GM12878 (cell line): ENCODE measurements at regions of chr2 and their contacts with region 1.

Region 1: GRCh38 chr2:57906152-57906732 is 140.4 kb upstream of the VRK2 start:
- DNase-seq: no peak
- ATAC-seq: peak; percentile 78
- H3K4me3 ChIP-seq: no peak overlapping the region
- H3K27ac ChIP-seq: no peak overlapping the region
- H3K4me1 ChIP-seq: peaks cover 11% of the 10 kb centered on the region; the same call in 1 of the 2 replicates
- H3K27me3 ChIP-seq: no peaks in the 10 kb centered on the region
- CTCF ChIP-seq: peak; percentile 86 to 90 (median 89); a peak in 5 of 6 replicates
- EP300 ChIP-seq: no peak
- POLR2A ChIP-seq: no peak
- RAD21 ChIP-seq: peak; percentile 100

Region 2: GRCh38 chr2:57720728-57721627 is 185.3 kb before region 1 on chr2:
- CTCF ChIA-PET with region 1: interaction called, 13 read pairs
- POLR2A ChIA-PET with region 1: no interaction called
- RAD21 ChIA-PET with region 1: interaction called, 10 read pairs
- SMC1A ChIA-PET with region 1: interaction called, 7 read pairs
- in situ Hi-C with region 1: no loop called
- intact Hi-C with region 1: loop called (anchors 2 kb)
- DNase-seq: peak; percentile 47
- ATAC-seq: peak; percentile 99
- H3K4me3 ChIP-seq: no peak overlapping the region
- H3K27ac ChIP-seq: no peak overlapping the region
- H3K4me1 ChIP-seq: no peaks in the 10 kb centered on the region
- H3K27me3 ChIP-seq: no peaks in the 10 kb centered on the region
- CTCF ChIP-seq: peak; percentile 91
- EP300 ChIP-seq: no peak
- POLR2A ChIP-seq: no peak
- RAD21 ChIP-seq: peak; percentile 93

Region 3: DNA sequence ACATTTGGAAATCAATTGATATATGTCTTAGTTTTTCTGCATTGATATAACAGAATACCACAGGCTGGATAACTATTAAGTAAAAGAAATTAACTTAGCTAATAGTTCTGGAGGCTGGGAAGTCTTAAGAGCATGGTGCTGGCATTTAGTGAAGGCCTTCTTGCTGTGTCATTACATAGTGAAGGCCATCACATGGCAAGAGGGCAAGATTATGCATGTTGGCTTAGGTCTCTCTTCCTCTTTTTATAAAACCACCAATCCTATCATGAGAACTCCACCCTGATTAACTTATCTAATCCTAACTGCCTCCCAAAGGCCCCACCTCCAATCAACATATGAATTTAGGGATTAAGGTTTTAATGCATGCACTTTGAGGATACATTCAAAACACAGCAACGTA is 85.2 kb before region 1 on chr2:
- CTCF ChIA-PET with region 1: no interaction called
- POLR2A ChIA-PET with region 1: no interaction called
- RAD21 ChIA-PET with region 1: no interaction called
- SMC1A ChIA-PET with region 1: no interaction called
- in situ Hi-C with region 1: no loop called
- intact Hi-C with region 1: no loop called
- DNase-seq: no peak
- ATAC-seq: peak; percentile 55
- H3K4me3 ChIP-seq: no peak overlapping the region
- H3K27ac ChIP-seq: no peak overlapping the region
- H3K4me1 ChIP-seq: no peaks in the 10 kb centered on the region
- H3K27me3 ChIP-seq: no peaks in the 10 kb centered on the region
- CTCF ChIP-seq: no peak
- EP300 ChIP-seq: no peak
- POLR2A ChIP-seq: no peak
- RAD21 ChIP-seq: no peak

Region 4: DNA sequence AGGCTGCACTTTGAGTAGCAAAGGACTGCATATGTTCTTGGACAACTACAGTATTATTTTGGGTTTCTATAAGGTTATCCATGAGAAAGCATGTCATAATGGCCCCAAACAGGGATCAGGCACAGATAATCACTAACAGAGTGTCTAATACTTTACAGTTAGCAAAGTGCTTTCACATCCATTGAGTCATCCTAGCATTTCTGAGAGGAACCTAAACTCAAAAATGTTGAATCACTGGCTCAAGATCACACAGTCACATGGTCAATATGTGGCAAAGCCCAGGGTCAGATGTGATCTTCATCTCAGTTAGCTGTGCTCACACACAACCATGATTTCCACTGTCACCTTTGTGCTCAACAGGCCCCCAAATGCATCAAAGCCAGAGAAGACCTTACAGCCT is 15.8 kb before region 1 on chr2:
- CTCF ChIA-PET with region 1: interaction called, 22 read pairs
- POLR2A ChIA-PET with region 1: interaction called, 4 read pairs
- RAD21 ChIA-PET with region 1: interaction called, 74 read pairs
- SMC1A ChIA-PET with region 1: interaction called, 159 read pairs
- in situ Hi-C with region 1: no loop called
- intact Hi-C with region 1: loop called (anchors 2 kb)
- DNase-seq: no peak
- ATAC-seq: peak; percentile 60
- H3K4me3 ChIP-seq: no peak overlapping the region
- H3K27ac ChIP-seq: no peak overlapping the region
- H3K4me1 ChIP-seq: peaks cover 63% of the 10 kb centered on the region
- H3K27me3 ChIP-seq: no peaks in the 10 kb centered on the region
- CTCF ChIP-seq: no peak
- EP300 ChIP-seq: 0 out of 4 replicates have a peak, but pooled peaks of 1 of the 2 experiments have one; percentile 12
- POLR2A ChIP-seq: no peak
- RAD21 ChIP-seq: no peak

Region 5: DNA sequence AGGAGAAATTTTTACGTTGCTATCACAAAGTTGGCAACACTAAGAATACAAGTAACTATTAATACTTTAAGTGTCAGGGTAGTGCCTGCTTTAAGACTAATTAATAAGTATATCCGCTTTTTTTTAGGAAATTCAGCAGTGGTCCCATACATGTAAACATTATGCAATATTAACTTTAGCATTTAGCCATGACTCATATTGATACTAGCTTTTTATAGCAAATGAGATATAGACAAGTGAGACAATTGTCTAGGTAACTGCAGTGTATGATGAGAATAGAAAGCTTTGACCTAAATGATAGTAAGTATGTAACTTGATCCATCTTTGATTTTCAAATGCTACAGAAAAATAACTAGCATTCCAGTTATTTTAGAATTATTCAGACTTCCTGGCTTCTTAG is 113.0 kb after region 1 on chr2:
- CTCF ChIA-PET with region 1: interaction called, 4 read pairs
- POLR2A ChIA-PET with region 1: interaction called, 5 read pairs
- RAD21 ChIA-PET with region 1: interaction called, 17 read pairs
- SMC1A ChIA-PET with region 1: interaction called, 18 read pairs
- in situ Hi-C with region 1: no loop called
- intact Hi-C with region 1: no loop called
- DNase-seq: no peak
- ATAC-seq: peak; percentile 81
- H3K4me3 ChIP-seq: no peak overlapping the region
- H3K27ac ChIP-seq: no peak overlapping the region
- H3K4me1 ChIP-seq: peaks cover 12% of the 10 kb centered on the region; the same call in 1 of the 2 replicates
- H3K27me3 ChIP-seq: no peaks in the 10 kb centered on the region
- CTCF ChIP-seq: no peak
- EP300 ChIP-seq: peak; percentile 56
- POLR2A ChIP-seq: no peak
- RAD21 ChIP-seq: no peak

Region 6: DNA sequence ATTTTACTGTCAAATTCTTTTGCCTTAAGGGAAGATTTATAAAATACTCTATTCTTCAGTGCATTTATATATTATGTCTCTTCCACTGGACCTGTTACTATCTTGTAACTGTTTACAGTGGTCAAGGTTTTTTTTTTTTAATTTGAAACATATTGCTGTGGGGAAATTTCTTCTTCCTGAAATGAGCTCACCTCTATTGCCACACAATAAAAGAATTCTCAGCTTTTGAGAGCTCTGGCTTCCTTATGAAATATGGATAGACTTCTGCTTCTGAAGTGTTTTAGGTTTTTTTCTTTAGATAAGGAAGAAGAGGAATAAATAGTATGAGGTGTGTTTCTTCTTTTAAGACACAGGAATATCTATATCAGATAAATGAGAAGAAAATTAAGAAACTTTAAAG is 148.0 kb after region 1 on chr2:
- CTCF ChIA-PET with region 1: interaction called, 7 read pairs
- POLR2A ChIA-PET with region 1: no interaction called
- RAD21 ChIA-PET with region 1: interaction called, 12 read pairs
- SMC1A ChIA-PET with region 1: interaction called, 18 read pairs
- in situ Hi-C with region 1: no loop called
- intact Hi-C with region 1: no loop called
- DNase-seq: no peak
- ATAC-seq: no peak
- H3K4me3 ChIP-seq: no peak overlapping the region
- H3K27ac ChIP-seq: no peak overlapping the region
- H3K4me1 ChIP-seq: peaks cover 6% of the 10 kb centered on the region
- H3K27me3 ChIP-seq: no peaks in the 10 kb centered on the region
- CTCF ChIP-seq: no peak
- EP300 ChIP-seq: no peak
- POLR2A ChIP-seq: no peak
- RAD21 ChIP-seq: no peak

Region 7: GRCh38 chr2:58350484-58350883 is 444.2 kb after region 1 on chr2:
- CTCF ChIA-PET with region 1: interaction called, 5 read pairs
- POLR2A ChIA-PET with region 1: no interaction called
- RAD21 ChIA-PET with region 1: no interaction called
- SMC1A ChIA-PET with region 1: no interaction called
- in situ Hi-C with region 1: loop called (anchors 5 kb)
- intact Hi-C with region 1: loop called (anchors 5 kb)
- DNase-seq: peak; percentile 21
- ATAC-seq: peak; percentile 97
- H3K4me3 ChIP-seq: no peak overlapping the region
- H3K27ac ChIP-seq: no peak overlapping the region
- H3K4me1 ChIP-seq: no peaks in the 10 kb centered on the region
- H3K27me3 ChIP-seq: peaks cover 0 to 3% of the 10 kb centered on the region in 2 experiments; a peak in 1 of 4 replicates
- CTCF ChIP-seq: no peak
- EP300 ChIP-seq: peak; percentile 58 to 61; a peak in 3 of 4 replicates
- POLR2A ChIP-seq: no peak
- RAD21 ChIP-seq: no peak

Region 8: DNA sequence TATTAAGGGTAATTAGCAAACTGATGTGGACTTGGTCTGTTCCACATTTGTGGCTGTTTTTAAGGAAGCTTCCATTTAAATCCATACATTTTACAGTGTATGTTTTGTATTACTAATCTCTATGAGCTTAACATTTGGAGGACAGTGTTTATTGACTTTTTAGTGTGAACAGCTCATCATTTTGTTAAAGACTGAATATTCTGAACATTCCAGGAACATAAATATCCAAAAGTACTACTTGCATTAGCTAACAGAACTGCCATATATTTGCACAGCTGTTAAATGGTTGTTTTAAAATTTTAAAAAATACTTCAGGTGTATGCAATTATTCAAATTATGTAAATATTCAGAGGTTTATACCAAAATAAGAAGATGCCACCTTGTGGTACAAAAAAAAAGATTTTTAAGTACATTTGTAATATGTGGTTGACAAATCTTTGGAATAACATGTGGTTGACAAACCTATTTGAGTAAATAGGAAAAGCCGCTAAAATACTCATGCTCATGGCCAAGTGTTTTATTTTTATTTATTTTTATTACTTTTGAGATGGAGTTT is 774.6 kb after region 1 on chr2:
- CTCF ChIA-PET with region 1: interaction called, 10 read pairs
- POLR2A ChIA-PET with region 1: no interaction called
- RAD21 ChIA-PET with region 1: interaction called, 4 read pairs
- SMC1A ChIA-PET with region 1: interaction called, 4 read pairs
- in situ Hi-C with region 1: no loop called
- intact Hi-C with region 1: loop called (anchors 5 kb)
- DNase-seq: no peak
- ATAC-seq: no peak
- H3K4me3 ChIP-seq: no peak overlapping the region
- H3K27ac ChIP-seq: no peak overlapping the region
- H3K4me1 ChIP-seq: no peaks in the 10 kb centered on the region
- H3K27me3 ChIP-seq: no peaks in the 10 kb centered on the region
- CTCF ChIP-seq: no peak
- EP300 ChIP-seq: no peak
- POLR2A ChIP-seq: no peak
- RAD21 ChIP-seq: no peak